ENCODE measurements at regions of chr10 and their contacts with region 1.

Region 1: GRCh38 chr10:59633063-59633462 is 76.6 kb downstream of the SLC16A9 start:
- DNase-seq: no peak
- ATAC-seq: no peak
- H3K4me3 ChIP-seq: no peak overlapping the region
- H3K27ac ChIP-seq: no peak overlapping the region
- H3K4me1 ChIP-seq: no peaks in the 10 kb centered on the region
- H3K27me3 ChIP-seq: no peaks in the 10 kb centered on the region

Region 2: GRCh38 chr10:58817201-58817846 is 815.7 kb before region 1 on chr10:
- intact Hi-C with region 1: no loop called
- DNase-seq: no peak
- ATAC-seq: peak in 1 of 2 donors; percentile 65
- H3K4me3 ChIP-seq: no peak overlapping the region
- H3K27ac ChIP-seq: no peak overlapping the region
- H3K4me1 ChIP-seq: peaks cover 4% of the 10 kb centered on the region
- H3K27me3 ChIP-seq: no peaks in the 10 kb centered on the region

Region 3: GRCh38 chr10:59505926-59506325 is 127.1 kb before region 1 on chr10:
- intact Hi-C with region 1: no loop called
- DNase-seq: no peak
- ATAC-seq: no peak
- H3K4me3 ChIP-seq: no peak overlapping the region
- H3K27ac ChIP-seq: no peak overlapping the region
- H3K4me1 ChIP-seq: peaks cover 1% of the 10 kb centered on the region
- H3K27me3 ChIP-seq: no peaks in the 10 kb centered on the region

Region 4: DNA sequence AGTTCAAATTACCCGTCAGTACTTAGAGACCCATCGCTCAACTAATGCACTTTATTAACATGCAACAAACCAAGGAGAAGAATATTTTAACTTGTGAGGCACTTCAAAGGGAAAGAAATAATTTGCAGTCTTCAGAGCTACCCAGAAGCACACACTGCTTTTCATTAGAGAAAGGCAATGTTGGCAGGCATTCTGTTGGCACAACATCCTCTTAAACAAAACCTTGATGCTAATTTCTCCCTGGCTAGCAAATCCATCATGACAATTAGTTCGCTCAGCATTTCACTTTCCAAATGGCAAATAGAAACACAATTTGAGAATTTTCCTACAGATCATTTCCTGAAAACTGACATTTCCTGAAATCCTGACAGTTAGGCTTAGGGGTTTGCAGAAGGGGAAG is 115.1 kb before region 1 on chr10:
- intact Hi-C with region 1: no loop called
- DNase-seq: no peak
- ATAC-seq: no peak
- H3K4me3 ChIP-seq: no peak overlapping the region
- H3K27ac ChIP-seq: no peak overlapping the region
- H3K4me1 ChIP-seq: no peaks in the 10 kb centered on the region
- H3K27me3 ChIP-seq: no peaks in the 10 kb centered on the region

Region 5: GRCh38 chr10:59830601-59831259 is 197.7 kb after region 1 on chr10:
- intact Hi-C with region 1: loop called in 2 of 4 experiments (anchors 5 kb)
- DNase-seq: peak in 1 of 3 donors; percentile 59
- ATAC-seq: peak; percentile 65 to 68
- H3K4me3 ChIP-seq: no peak overlapping the region
- H3K27ac ChIP-seq: no peak overlapping the region
- H3K4me1 ChIP-seq: peaks cover 2% of the 10 kb centered on the region
- H3K27me3 ChIP-seq: no peaks in the 10 kb centered on the region

Measured in right cardiac atrium (tissue), 5 donors.